ENCODE measurements at regions of chr4 and their contacts with region 1.

Region 1: DNA sequence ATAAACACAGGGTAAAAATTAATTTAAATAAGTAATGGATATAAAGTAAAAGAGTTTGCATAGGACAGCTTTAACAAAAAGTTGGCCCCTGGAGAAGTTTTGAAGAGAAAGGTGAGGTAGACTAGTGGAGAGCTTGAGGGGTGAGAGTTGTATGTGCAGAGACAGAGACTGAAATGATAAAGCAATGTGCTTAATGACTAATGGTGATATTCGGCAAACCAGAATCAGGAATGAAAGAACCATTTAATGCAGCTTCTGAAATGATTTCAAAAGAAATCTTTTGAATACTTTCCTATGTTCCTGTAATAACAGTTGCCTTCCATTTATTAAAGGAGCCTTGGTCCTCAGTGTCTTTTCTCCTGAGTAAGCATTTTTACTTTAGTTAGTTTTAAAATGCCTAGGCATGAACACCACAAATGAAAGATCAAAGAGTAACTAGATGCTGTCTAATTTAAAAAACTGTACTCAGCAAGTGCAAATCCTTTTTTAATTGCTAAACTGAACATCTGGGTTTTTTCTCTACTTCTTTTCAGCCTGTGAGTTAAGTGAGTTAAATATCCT is 28.5 kb downstream of the CAMK2D start:
- DNase-seq: no peak
- H3K4me3 Mint-ChIP-seq: no peak overlapping the region
- H3K27ac Mint-ChIP-seq: peak overlapping the region; percentile 50
- H3K4me1 Mint-ChIP-seq: peaks cover 48% of the 10 kb centered on the region
- H3K27me3 Mint-ChIP-seq: no peaks in the 10 kb centered on the region

Region 2: GRCh38 chr4:113292371-113293042 is 440.5 kb before region 1 on chr4:
- intact Hi-C with region 1: no loop called
- DNase-seq: no peak
- H3K4me3 Mint-ChIP-seq: no peak overlapping the region
- H3K27ac Mint-ChIP-seq: no peak overlapping the region
- H3K4me1 Mint-ChIP-seq: no peaks in the 10 kb centered on the region
- H3K27me3 Mint-ChIP-seq: peaks cover 12% of the 10 kb centered on the region

Region 3: DNA sequence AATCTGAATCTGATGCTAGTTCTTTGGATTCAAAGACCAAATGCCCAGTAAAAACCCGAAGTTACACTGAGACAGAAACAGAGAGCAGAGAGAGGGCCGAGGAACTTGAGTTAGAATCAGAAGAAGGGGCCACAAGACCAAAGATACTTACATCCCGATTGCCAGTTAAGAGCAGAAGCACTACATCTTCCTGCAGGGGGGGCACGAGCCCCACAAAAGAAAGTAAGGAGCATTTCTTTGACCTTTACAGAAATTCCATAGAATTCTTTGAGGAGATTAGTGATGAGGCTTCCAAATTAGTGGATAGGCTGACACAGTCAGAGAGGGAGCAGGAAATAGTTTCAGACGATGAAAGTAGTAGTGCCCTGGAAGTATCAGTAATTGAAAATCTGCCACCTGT is 374.3 kb before region 1 on chr4:
- intact Hi-C with region 1: no loop called
- DNase-seq: no peak
- H3K4me3 Mint-ChIP-seq: no peak overlapping the region
- H3K27ac Mint-ChIP-seq: no peak overlapping the region
- H3K4me1 Mint-ChIP-seq: peaks cover 20% of the 10 kb centered on the region
- H3K27me3 Mint-ChIP-seq: peaks cover 24% of the 10 kb centered on the region

Region 4: DNA sequence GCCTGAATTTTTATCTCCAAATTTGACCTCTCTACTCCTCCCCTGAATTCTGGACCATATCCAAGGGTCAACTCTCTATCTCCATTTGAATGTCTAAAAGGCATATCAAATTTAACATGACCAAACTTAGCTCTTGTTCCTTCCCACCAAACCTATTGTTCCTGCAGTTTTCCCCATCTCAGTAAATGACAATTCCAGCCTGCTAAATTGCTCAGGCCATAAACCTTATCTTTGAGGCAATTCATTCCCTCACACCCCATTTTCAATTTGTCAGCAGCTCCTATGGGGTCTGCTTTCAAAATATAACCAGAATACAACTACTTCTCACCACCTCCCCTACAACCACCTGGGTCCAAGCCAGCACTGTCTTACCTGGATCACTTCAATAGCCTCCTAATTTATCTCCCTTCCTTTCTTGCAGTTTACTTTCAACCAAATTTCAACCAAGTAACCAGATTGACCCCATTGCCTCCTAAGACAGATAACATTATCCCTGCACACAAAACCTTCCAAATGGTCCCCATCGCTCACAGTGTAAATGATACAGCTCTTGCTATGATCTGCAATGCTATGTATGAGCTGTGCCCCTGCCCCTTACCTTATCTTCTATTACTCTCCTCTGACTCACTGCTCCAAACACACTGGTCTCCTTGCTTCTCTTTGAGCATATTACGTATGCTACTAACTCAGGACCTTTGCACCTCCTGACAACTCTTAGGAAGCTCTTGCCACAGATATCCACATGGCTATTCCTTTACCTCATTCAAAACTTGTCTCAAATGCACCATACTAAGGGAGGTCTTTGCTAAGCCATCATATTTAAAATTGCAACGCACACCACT is 37.5 kb before region 1 on chr4:
- intact Hi-C with region 1: loop called (anchors 1 kb)
- DNase-seq: no peak
- H3K4me3 Mint-ChIP-seq: no peak overlapping the region
- H3K27ac Mint-ChIP-seq: no peak overlapping the region
- H3K4me1 Mint-ChIP-seq: peaks cover 28% of the 10 kb centered on the region
- H3K27me3 Mint-ChIP-seq: no peaks in the 10 kb centered on the region

Region 5: DNA sequence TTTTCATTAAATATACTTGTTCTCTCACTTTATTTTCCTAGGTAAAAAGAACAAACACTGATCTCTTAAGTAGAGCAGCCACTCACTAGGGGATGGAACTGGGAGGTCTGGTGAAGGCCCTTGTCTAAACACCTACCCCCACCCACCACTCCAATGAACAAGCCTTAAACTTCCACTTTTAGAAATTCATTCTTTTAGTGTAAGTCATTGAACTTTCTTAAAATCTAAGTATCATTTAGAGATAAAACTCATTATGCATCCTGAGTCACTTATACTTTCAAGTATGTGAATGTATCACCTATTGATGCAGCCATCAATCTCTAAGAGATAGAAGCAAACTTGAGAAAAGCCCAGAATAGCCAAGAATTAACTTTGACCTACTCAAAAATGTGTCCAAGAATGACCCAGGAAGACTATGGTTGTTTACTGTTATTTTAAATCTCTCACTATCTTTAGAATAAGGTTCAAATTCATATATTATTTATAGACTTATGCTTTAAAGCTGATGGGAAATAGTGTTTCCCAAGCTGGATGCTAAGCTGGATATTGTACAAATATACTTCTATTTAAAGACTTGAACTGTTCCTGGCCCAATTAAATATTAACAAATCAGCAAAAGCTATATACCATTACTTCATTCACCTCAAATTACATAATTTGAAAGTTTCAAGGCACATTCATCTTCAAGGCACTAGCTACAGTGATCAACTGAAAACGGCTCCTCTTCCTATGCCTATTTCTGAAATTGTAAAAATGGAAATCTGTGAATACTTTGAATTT is 21.0 kb before region 1 on chr4:
- intact Hi-C with region 1: loop called (anchors 2 kb)
- DNase-seq: no peak
- H3K4me3 Mint-ChIP-seq: no peak overlapping the region
- H3K27ac Mint-ChIP-seq: no peak overlapping the region
- H3K4me1 Mint-ChIP-seq: peaks cover 14% of the 10 kb centered on the region
- H3K27me3 Mint-ChIP-seq: no peaks in the 10 kb centered on the region

Region 6: GRCh38 chr4:113756005-113756410 is 23.0 kb after region 1 on chr4:
- intact Hi-C with region 1: loop called (anchors 1 kb)
- DNase-seq: no peak
- H3K4me3 Mint-ChIP-seq: peak overlapping the region; percentile 68
- H3K27ac Mint-ChIP-seq: peak overlapping the region; percentile 80
- H3K4me1 Mint-ChIP-seq: peaks cover 43% of the 10 kb centered on the region
- H3K27me3 Mint-ChIP-seq: no peaks in the 10 kb centered on the region

Measured in activated CD4-positive, alpha-beta T cell treated with anti-CD3 and anti-CD28 coated beads, Interleukin-2, amount 10 ng/mL, durations not matched to agents 24 days and 14 days (primary cell).